ENCODE measurements at regions of chr1 and their contacts with region 1.

Region 1: GRCh38 chr1:6245086-6245868 is 1.3 kb downstream of the HES3 start:
- DNase-seq: peak; percentile 79 to 81 (median 80)
- ATAC-seq: peak; percentile 76 to 92 (median 84)
- H3K4me3 ChIP-seq: no peak overlapping the region
- H3K27ac ChIP-seq: no peak overlapping the region
- H3K4me1 ChIP-seq: peaks cover 0 to 25% (median 0%) of the 10 kb centered on the region in 4 donors
- H3K27me3 ChIP-seq: peaks cover 5 to 41% of the 10 kb centered on the region in 2 donors
- CTCF ChIP-seq: peak; percentile 69 to 88 (median 76)
- POLR2A ChIP-seq: no peak

Region 2: DNA sequence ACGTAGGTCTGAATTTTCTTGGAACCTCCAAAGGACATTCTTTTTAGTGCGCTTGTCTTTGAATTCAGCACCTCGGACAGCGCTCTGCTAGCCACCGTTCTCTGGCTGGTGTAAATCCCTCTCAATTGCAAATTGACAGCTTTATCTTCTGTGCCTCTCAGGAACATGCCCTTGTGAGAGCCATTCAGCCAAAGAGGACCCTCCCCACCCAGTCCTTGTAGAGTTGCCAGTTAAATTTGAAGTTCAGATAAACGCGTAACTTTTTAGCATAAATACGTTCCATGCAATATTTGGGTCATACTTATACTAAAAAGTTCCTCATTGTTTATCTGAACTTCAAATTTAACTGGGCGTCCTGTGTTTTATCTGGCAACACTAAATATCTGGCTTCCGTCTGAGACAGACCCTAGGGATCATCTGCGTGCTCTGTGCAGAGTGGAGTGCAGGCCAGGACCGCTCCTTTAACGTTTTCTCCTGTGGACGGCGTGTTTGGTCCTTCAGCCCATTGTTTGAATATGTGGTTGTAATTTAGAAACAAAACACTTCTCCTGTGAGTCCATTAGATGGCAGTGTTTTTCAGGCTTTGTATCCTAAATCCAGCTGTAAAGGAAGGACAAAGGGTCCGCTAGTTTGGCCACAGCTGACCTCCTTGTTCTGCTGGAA is 192.6 kb before region 1 on chr1:
- intact Hi-C with region 1: loop called (anchors 5 to 10 kb)
- DNase-seq: peak in 1 of 3 donors; percentile 55
- ATAC-seq: peak; percentile 39 to 54 (median 46)
- H3K4me3 ChIP-seq: no peak overlapping the region
- H3K27ac ChIP-seq: no peak overlapping the region
- H3K4me1 ChIP-seq: no peaks in the 10 kb centered on the region
- H3K27me3 ChIP-seq: no peaks in the 10 kb centered on the region
- CTCF ChIP-seq: peak; percentile 22 to 42 (median 30)
- POLR2A ChIP-seq: no peak

Region 3: GRCh38 chr1:6108937-6109614 is 136.2 kb before region 1 on chr1:
- intact Hi-C with region 1: loop called in 1 of 2 experiments (anchors 5 kb)
- DNase-seq: peak in 2 of 3 donors; percentile 25 to 52
- ATAC-seq: peak; percentile 59 to 76 (median 66)
- H3K4me3 ChIP-seq: no peak overlapping the region
- H3K27ac ChIP-seq: no peak overlapping the region
- H3K4me1 ChIP-seq: no peaks in the 10 kb centered on the region
- H3K27me3 ChIP-seq: no peaks in the 10 kb centered on the region
- CTCF ChIP-seq: peak; percentile 22 to 42 (median 28)
- POLR2A ChIP-seq: no peak

Region 4: DNA sequence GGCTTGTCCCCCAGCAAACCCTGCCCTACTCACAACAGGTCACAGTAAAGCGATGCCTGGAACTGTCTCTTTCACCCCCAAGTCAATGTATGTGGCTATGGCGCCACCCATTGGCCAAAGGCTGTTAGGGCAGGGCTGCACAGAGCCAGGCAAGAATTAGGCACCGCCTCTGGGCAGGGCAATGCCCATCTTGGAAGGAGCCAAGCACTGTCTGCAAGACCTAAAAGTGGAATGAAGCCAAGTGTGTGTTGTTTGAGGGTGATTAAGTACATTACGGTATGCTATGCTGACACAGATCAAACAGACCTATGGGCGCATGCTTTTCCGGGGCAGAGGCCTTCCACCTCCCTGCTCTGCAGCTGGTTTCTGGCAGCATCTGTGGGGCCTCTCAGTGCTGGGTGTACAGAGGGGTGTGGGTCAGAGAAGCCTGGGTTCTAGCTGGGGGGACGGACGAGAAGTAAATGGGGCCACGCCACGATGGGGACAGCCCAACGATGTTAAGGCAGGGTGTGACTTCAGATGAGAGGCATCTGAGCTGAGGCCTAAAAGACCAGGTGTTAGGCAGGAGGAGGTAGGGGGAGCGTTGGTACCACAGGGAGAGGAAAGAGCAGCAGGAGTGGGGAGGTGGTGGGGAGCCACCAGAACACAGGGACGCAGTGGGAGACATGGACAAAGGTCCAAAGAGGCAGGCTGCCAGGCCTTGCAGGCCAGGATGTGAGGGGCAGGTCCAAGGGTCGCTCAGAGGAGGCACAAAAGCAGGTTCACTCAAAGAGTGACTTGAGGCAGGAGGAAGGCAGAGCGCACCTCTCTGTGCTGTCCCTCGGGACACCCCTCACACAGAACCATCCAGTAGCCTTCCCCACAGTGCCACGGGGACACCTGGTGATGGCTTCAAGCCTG is 98.5 kb after region 1 on chr1:
- intact Hi-C with region 1: loop called (anchors 5 kb)
- DNase-seq: peak in 1 of 3 donors; percentile 66
- ATAC-seq: peak; percentile 68 to 84 (median 75)
- H3K4me3 ChIP-seq: no peak overlapping the region
- H3K27ac ChIP-seq: no peak overlapping the region
- H3K4me1 ChIP-seq: peaks cover 0 to 4% (median 0%) of the 10 kb centered on the region in 4 donors
- H3K27me3 ChIP-seq: no peaks in the 10 kb centered on the region
- CTCF ChIP-seq: peak; percentile 62 to 85 (median 76)
- POLR2A ChIP-seq: no peak

Region 5: DNA sequence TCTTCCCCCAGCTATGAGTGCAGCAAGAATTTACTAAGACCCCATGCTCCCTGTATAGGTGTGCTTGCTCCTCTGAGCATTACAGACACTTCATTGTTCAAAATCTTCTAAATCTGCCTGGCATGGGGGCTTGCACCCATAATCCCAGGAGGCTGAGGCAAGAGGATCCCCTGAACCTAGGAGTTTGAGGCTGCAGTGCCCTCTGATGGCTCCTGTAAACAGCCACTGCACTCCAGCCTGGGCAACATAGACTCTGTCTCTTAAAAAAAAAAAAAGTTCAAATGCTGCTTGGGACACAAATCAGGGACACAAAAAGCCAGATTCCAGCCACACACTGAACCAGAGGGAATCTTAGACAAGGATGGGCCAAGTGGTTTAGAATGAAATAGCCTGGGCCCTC is 151.7 kb after region 1 on chr1:
- intact Hi-C with region 1: no loop called
- DNase-seq: no peak
- ATAC-seq: no peak
- H3K4me3 ChIP-seq: no peak overlapping the region
- H3K27ac ChIP-seq: no peak overlapping the region
- H3K4me1 ChIP-seq: peaks cover 0 to 14% (median 2%) of the 10 kb centered on the region in 4 donors
- H3K27me3 ChIP-seq: no peaks in the 10 kb centered on the region
- CTCF ChIP-seq: peak in 1 of 4 donors; percentile 9
- POLR2A ChIP-seq: no peak

Region 6: DNA sequence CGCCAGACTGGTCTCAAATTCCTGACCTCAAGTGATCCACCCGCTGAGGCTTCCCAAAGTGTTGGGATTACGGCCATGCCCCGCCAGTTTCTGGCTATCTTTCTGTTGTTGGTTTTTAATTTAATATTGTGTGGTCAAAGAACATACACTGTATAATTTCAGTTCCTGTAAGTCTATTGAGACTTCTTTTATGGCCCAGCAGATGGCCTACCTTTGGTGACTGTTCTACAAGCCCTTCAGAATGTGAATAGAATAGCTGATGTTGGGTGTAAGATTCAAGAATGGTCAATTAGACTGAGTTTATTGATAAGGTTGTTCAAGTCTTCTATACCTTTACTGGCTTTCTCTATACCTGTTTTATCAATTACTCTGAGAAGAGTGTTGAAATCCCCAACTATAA is 163.8 kb after region 1 on chr1:
- intact Hi-C with region 1: loop called in 1 of 2 experiments (anchors 5 kb)
- DNase-seq: no peak
- ATAC-seq: no peak
- H3K4me3 ChIP-seq: no peak overlapping the region
- H3K27ac ChIP-seq: no peak overlapping the region
- H3K4me1 ChIP-seq: peaks cover 0 to 11% (median 3%) of the 10 kb centered on the region in 4 donors
- H3K27me3 ChIP-seq: no peaks in the 10 kb centered on the region
- CTCF ChIP-seq: no peak
- POLR2A ChIP-seq: no peak

Region 7: DNA sequence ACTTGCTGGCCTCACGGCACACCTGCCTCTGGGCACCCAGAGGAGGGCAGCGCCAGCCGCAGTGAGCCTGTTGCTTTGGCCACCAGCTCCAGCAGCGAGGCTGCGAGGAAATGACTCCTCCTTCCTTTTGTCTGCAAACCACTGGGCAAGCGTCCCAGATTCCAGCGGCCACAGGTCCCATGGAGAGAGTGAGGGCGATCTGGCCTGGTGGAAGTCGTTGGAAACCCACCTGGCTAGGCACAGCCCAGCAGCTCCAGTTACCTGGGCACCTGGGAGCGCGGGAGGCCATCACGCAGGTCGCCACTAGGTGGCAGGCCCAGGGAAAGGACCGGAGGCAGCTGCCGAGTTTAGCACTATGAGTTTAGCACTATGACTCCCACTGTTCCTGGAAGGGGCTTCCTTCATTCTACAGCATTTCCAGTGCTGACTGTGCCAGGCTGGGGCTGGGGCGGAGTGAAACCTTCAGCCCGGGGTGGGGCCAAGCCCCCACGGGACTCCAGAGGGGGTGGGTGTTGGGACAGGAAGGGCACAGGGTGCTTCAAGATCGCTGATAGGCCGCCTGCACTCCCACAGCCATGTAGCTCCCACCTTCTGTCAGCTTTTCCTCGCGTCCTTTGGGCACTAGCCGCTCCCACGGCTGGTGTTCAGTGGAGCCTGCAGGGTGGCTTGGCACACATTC is 178.2 kb after region 1 on chr1:
- intact Hi-C with region 1: loop called in 1 of 2 experiments (anchors 10 kb)
- DNase-seq: peak in 2 of 3 donors; percentile 67 to 75
- ATAC-seq: peak; percentile 69 to 79 (median 78)
- H3K4me3 ChIP-seq: no peak overlapping the region
- H3K27ac ChIP-seq: no peak overlapping the region
- H3K4me1 ChIP-seq: peaks cover 0 to 30% (median 0%) of the 10 kb centered on the region in 4 donors
- H3K27me3 ChIP-seq: peaks cover 3 to 36% of the 10 kb centered on the region in 2 donors
- CTCF ChIP-seq: peak; percentile 62 to 82 (median 74)
- POLR2A ChIP-seq: no peak